ENCODE measurements at regions of chr5 and their contacts with region 1.

Region 1: GRCh38 chr5:62317810-62318209 is 11.8 kb downstream of the KIF2A start:
- DNase-seq: no peak
- CTCF ChIP-seq: no peak

Region 2: GRCh38 chr5:61999371-61999770 is 318.4 kb before region 1 on chr5:
- CTCF ChIA-PET with region 1: no interaction called
- POLR2A ChIA-PET with region 1: no interaction called
- DNase-seq: no peak
- CTCF ChIP-seq: no peak

Region 3: GRCh38 chr5:62306892-62307689 is 10.7 kb before region 1 on chr5:
- CTCF ChIA-PET with region 1: interaction called, 12 read pairs
- POLR2A ChIA-PET with region 1: no interaction called
- DNase-seq: peak; percentile 50
- CTCF ChIP-seq: no peak

Measured in GM10248 (cell line).